ENCODE measurements at regions of chr4 and their contacts with region 1.

Region 1: GRCh38 chr4:40180356-40180755 is 16.5 kb upstream of the RHOH start:
- DNase-seq: peak; percentile 85
- H3K4me3 ChIP-seq: no peak overlapping the region
- H3K27ac ChIP-seq: peak overlapping the region; percentile 70
- H3K4me1 ChIP-seq: peaks cover 11% of the 10 kb centered on the region
- H3K27me3 ChIP-seq: no peaks in the 10 kb centered on the region
- CTCF ChIP-seq: no peak
- POLR2A ChIP-seq: no peak

Region 2: DNA sequence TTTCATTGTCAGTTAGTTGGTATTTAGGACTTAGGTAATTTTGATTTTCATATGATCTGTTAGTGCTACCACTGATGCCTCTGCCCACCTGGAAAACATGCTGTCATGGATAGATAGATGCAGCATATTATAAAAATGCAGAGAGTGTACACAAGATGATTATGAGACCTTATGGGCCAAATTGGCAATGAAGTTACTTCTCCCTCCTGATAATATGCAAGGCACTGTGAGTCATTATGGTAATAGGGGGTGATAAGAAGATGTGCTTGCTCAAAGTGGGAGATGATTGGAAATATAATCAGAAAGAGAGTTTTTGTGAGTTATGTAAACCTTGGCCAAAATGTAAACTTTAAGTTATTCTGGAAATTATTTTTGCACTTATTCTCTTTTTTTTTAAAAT is 40.2 kb before region 1 on chr4:
- CTCF ChIA-PET with region 1: no interaction called
- POLR2A ChIA-PET with region 1: no interaction called
- dilution Hi-C with region 1: no loop called
- intact Hi-C with region 1: no loop called
- DNase-seq: no peak
- H3K4me3 ChIP-seq: no peak overlapping the region
- H3K27ac ChIP-seq: no peak overlapping the region
- H3K4me1 ChIP-seq: no peaks in the 10 kb centered on the region
- H3K27me3 ChIP-seq: no peaks in the 10 kb centered on the region
- CTCF ChIP-seq: no peak
- POLR2A ChIP-seq: no peak

Region 3: GRCh38 chr4:40165931-40166330 is 14.4 kb before region 1 on chr4:
- CTCF ChIA-PET with region 1: interaction called, 6 read pairs
- POLR2A ChIA-PET with region 1: no interaction called
- dilution Hi-C with region 1: no loop called
- intact Hi-C with region 1: loop called (anchors 1 kb)
- DNase-seq: peak; percentile 76
- H3K4me3 ChIP-seq: no peak overlapping the region
- H3K27ac ChIP-seq: peak overlapping the region; percentile 24
- H3K4me1 ChIP-seq: peaks cover 13% of the 10 kb centered on the region
- H3K27me3 ChIP-seq: no peaks in the 10 kb centered on the region
- CTCF ChIP-seq: no peak
- POLR2A ChIP-seq: no peak

Region 4: GRCh38 chr4:40255393-40256281 is 75.3 kb after region 1 on chr4:
- CTCF ChIA-PET with region 1: interaction called, 3 read pairs
- POLR2A ChIA-PET with region 1: no interaction called
- dilution Hi-C with region 1: no loop called
- intact Hi-C with region 1: loop called (anchors 2 kb)
- DNase-seq: peak; percentile 96
- H3K4me3 ChIP-seq: peak overlapping the region in 1 of 3 experiments; percentile 9
- H3K27ac ChIP-seq: peak overlapping the region; percentile 67
- H3K4me1 ChIP-seq: peaks cover 29% of the 10 kb centered on the region
- H3K27me3 ChIP-seq: no peaks in the 10 kb centered on the region
- CTCF ChIP-seq: no peak
- POLR2A ChIP-seq: no peak

Measured in endothelial cell of umbilical vein (primary cell).